H1 (cell line): ENCODE measurements at regions of chr7 and their contacts with region 1.

Region 1: DNA sequence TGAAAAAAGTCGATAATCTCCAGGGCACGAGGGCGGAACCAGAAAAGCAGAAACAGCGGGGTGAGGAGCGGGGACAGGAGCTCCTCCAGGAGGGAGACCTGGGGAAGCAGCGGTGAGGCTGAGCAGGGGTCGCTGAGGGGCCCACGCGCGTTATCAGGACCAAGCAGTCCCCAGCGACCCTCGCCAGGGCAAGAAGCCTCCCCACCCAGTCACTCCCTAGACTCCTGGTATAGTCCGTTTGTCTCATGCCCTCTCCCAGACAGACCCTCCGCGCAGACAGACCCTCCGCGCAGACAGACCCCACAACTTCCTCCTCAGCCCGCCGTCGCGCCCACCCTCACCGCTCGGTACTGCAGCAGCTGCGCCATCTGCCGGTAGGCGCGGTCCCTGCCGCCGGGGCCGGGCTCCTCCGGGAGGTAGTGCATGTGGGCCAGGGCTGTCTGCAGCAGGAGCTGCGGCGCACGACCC is 6.3 kb downstream of the ATG9B start:
- DNase-seq: peak in 1 of 2 experiments; percentile 99
- H3K4me3 ChIP-seq: peak overlapping the region in 2 of 4 experiments; percentile 17 to 50; a peak in 5 of 8 replicates
- H3K27ac ChIP-seq: no peak overlapping the region
- H3K4me1 ChIP-seq: peaks cover 0 to 29% (median 19%) of the 10 kb centered on the region in 4 experiments; a peak in 5 of 7 replicates
- H3K27me3 ChIP-seq: peaks cover 8 to 46% (median 39%) of the 10 kb centered on the region in 4 experiments
- CTCF ChIP-seq: peak in 2 of 3 experiments; percentile 95 to 97; a peak in 3 of 4 replicates
- EP300 ChIP-seq: peak in 1 of 2 experiments; percentile 40; a peak in 1 of 3 replicates
- POLR2A ChIP-seq: no peak
- RAD21 ChIP-seq: peak; percentile 58 to 72

Region 2: GRCh38 chr7:150737265-150738055 is 280.5 kb before region 1 on chr7 and contains the start of gene GIMAP5:
- CTCF ChIA-PET with region 1: no interaction called
- POLR2A ChIA-PET with region 1: no interaction called
- DNase-seq: no peak
- H3K4me3 ChIP-seq: no peak within 1 kb of the TSS
- H3K27ac ChIP-seq: no peak within 1 kb of the TSS
- H3K4me1 ChIP-seq: peaks cover 0 to 2% (median 0%) of the 10 kb centered on the region in 4 experiments; a peak in 1 of 7 replicates
- H3K27me3 ChIP-seq: peaks cover 89 to 97% (median 97%) of the 10 kb centered on the region in 4 experiments
- CTCF ChIP-seq: no peak
- EP300 ChIP-seq: no peak
- POLR2A ChIP-seq: no peak
- RAD21 ChIP-seq: no peak
- total RNA-seq, gene GIMAP5: not detected in 2 replicates

Region 3: DNA sequence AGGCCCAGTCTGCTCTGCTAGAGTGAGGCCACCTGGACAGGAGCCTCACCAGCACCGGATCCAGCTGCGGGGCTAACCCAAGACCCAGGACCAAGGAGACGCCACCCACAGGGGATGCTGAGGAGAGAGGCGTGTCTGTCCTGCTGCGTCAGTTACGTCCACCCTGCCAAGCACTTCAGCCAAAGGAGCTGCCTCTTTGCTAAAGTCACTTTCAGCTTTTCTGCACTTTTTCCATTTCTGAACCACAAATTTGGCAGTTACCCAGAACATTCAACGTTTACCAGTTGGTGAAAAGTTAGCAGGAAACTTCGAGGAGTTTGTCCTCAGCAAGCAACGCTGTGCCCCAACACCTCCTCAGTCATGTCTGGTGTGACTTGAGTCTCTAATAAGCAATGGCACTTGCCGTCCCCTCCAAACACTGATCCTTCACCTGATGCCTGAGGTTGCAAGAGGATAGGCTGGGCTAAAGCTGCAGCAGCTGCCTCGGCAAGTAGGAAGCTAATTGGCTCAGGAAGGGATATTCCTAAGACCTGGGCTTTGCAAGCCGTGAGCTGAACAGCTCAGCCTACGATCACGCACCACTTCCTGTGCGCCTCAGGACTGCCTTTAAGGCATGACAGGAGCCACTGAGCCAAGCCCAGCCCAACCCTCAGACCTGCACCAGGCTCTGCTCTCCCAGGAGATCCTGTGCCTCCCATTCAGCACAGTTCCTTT is 80.0 kb before region 1 on chr7:
- CTCF ChIA-PET with region 1: no interaction called
- POLR2A ChIA-PET with region 1: no interaction called
- DNase-seq: no peak
- H3K4me3 ChIP-seq: no peak overlapping the region
- H3K27ac ChIP-seq: no peak overlapping the region
- H3K4me1 ChIP-seq: peaks cover 0 to 8% (median 5%) of the 10 kb centered on the region in 4 experiments; a peak in 5 of 7 replicates
- H3K27me3 ChIP-seq: peaks cover 0 to 2% (median 0%) of the 10 kb centered on the region in 4 experiments; a peak in 1 of 7 replicates
- CTCF ChIP-seq: no peak
- EP300 ChIP-seq: no peak
- POLR2A ChIP-seq: no peak
- RAD21 ChIP-seq: no peak

Region 4: DNA sequence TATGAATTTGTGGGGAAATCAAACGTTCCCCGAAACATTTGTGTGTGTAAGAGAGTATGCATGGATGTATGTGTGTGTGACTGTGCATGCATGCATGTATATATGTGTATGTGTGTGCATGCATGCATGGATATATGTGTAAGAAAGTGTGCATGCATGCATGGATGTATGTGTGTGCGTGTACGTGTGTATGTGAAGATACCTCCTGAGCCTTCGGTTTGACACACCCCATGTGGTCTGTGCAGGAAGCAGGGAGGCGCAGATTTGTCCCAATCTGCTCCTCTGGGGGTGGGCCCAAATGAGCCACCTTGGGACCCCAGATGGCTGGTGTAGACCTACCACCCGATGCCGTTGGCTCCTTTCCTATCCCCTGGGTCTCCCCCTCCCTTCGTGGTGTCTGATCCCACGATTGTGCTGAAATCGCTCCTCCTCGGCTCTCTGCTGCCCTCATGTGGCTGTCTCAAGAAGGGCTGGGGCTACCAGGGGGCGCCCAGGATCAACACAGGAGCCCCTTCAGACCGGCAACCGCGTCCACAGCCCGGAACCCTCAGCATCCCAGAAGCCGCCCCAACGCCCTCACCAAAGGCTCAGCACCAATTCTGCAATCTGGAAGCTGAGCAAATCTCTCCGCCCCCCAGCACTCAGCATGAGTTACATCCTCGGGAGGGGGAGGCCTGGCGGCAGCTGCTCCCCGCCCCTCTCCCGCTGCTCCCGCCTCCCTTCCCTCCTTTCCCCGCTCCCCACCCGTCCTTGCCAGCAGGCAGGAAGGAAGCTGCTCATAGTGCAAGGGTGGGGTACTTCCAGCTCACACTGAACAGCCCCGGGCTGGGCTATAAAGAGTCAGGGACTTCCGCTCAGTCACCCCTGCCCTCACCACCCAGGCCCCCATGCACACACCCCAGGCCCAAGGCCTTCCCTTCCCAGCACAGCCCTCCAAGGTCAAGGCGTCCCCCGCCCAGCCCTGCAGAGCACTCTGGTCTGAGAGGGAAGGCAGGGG is 29.5 kb before region 1 on chr7:
- CTCF ChIA-PET with region 1: interaction called, 142 read pairs
- POLR2A ChIA-PET with region 1: no interaction called
- DNase-seq: peak in 1 of 2 experiments; percentile 98
- H3K4me3 ChIP-seq: peak overlapping the region in 3 of 4 experiments; percentile 30 to 55 (median 42); a peak in 7 of 8 replicates
- H3K27ac ChIP-seq: no peak overlapping the region; the same call in 1 of the 2 replicates
- H3K4me1 ChIP-seq: peaks cover 4 to 17% (median 11%) of the 10 kb centered on the region in 4 experiments
- H3K27me3 ChIP-seq: no peaks in the 10 kb centered on the region
- CTCF ChIP-seq: peak in 2 of 3 experiments; percentile 92 to 97; a peak in 3 of 4 replicates
- EP300 ChIP-seq: no peak
- POLR2A ChIP-seq: no peak
- RAD21 ChIP-seq: peak; percentile 89 to 96

Region 5: GRCh38 chr7:151051108-151051507 is 33.1 kb after region 1 on chr7:
- CTCF ChIA-PET with region 1: interaction called, 14 read pairs
- POLR2A ChIA-PET with region 1: interaction called, 3 read pairs
- DNase-seq: peak in 1 of 2 experiments; percentile 92
- H3K4me3 ChIP-seq: peak overlapping the region in 1 of 4 experiments; percentile 39; a peak in 2 of 8 replicates
- H3K27ac ChIP-seq: no peak overlapping the region
- H3K4me1 ChIP-seq: peaks cover 0 to 8% (median 5%) of the 10 kb centered on the region in 4 experiments; a peak in 3 of 7 replicates
- H3K27me3 ChIP-seq: peaks cover 4 to 33% (median 26%) of the 10 kb centered on the region in 4 experiments
- CTCF ChIP-seq: peak in 1 of 3 experiments; percentile 4; a peak in 1 of 4 replicates
- EP300 ChIP-seq: peak in 1 of 2 experiments; percentile 79; a peak in 2 of 3 replicates
- POLR2A ChIP-seq: no peak
- RAD21 ChIP-seq: peak in 1 of 2 experiments; percentile 20; a peak in 1 of 4 replicates

Region 6: GRCh38 chr7:151080522-151081169 is 62.7 kb after region 1 on chr7 and contains the start of gene FASTK:
- CTCF ChIA-PET with region 1: interaction called, 23 read pairs
- POLR2A ChIA-PET with region 1: interaction called, 7 read pairs
- DNase-seq: peak in 1 of 2 experiments; percentile 88
- H3K4me3 ChIP-seq: peak within 1 kb of the TSS; percentile 79 to 94 (median 88)
- H3K27ac ChIP-seq: peak within 1 kb of the TSS; percentile 76
- H3K4me1 ChIP-seq: peaks cover 3 to 43% (median 27%) of the 10 kb centered on the region in 4 experiments
- H3K27me3 ChIP-seq: peaks cover 0 to 7% (median 5%) of the 10 kb centered on the region in 4 experiments; a peak in 5 of 7 replicates
- CTCF ChIP-seq: no peak; a peak in 1 of 4 replicates
- EP300 ChIP-seq: 0 out of 3 replicates have a peak, but pooled peaks of 1 of the 2 experiments have one; percentile 42
- POLR2A ChIP-seq: peak in 1 of 2 experiments; percentile 62; a peak in 2 of 3 replicates
- RAD21 ChIP-seq: no peak
- total RNA-seq, gene FASTK: 39.4 and 43.8 TPM in 2 replicates